Body of pancreas (tissue), 4 donors: ENCODE measurements at regions of chr12 and their contacts with region 1.

Region 1: GRCh38 chr12:12376646-12377448 is 20.0 kb downstream of the BORCS5 start:
- DNase-seq: peak in 3 of 4 donors; percentile 41 to 69 (median 59)
- ATAC-seq: peak; percentile 86
- H3K4me3 ChIP-seq: no peak overlapping the region
- H3K27ac ChIP-seq: no peak overlapping the region
- H3K4me1 ChIP-seq: peaks cover 29% of the 10 kb centered on the region
- H3K27me3 ChIP-seq: no peaks in the 10 kb centered on the region
- CTCF ChIP-seq: peak; percentile 50 to 94 (median 85)
- POLR2A ChIP-seq: no peak

Region 2: DNA sequence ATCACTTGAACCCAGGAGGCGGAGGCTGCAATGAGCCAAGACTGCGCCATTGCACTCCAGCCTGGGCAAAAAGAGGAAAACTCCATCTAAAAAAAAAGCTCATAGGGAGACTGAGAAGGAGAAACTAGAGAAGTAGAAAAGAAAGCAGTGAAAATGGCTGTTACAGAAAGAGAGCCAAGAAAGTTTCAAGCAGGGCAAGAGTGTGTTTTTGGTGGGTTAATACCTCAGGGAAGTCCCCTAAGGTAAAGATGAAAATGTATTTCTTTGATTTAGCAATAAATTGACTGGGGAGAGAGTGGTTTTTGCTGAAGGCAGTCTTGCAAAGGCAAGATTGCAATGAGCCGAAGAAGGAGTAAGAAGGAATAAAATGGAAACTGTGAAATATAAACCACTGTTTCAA is 195.8 kb after region 1 on chr12:
- intact Hi-C with region 1: loop called (anchors 5 kb)
- DNase-seq: no peak
- ATAC-seq: no peak
- H3K4me3 ChIP-seq: no peak overlapping the region
- H3K27ac ChIP-seq: no peak overlapping the region
- H3K4me1 ChIP-seq: no peaks in the 10 kb centered on the region
- H3K27me3 ChIP-seq: no peaks in the 10 kb centered on the region
- CTCF ChIP-seq: no peak
- POLR2A ChIP-seq: no peak

Region 3: GRCh38 chr12:12704593-12705230 is 327.9 kb after region 1 on chr12:
- intact Hi-C with region 1: loop called (anchors 10 kb)
- DNase-seq: peak; percentile 68 to 88 (median 79)
- ATAC-seq: peak; percentile 100
- H3K4me3 ChIP-seq: no peak overlapping the region
- H3K27ac ChIP-seq: peak overlapping the region in 2 of 4 donors; percentile 37 to 53
- H3K4me1 ChIP-seq: peaks cover 12% of the 10 kb centered on the region
- H3K27me3 ChIP-seq: no peaks in the 10 kb centered on the region
- CTCF ChIP-seq: peak; percentile 74 to 100 (median 99)
- POLR2A ChIP-seq: no peak

Region 4: GRCh38 chr12:12835378-12836145 is 458.7 kb after region 1 on chr12:
- intact Hi-C with region 1: no loop called
- DNase-seq: no peak
- ATAC-seq: no peak
- H3K4me3 ChIP-seq: no peak overlapping the region
- H3K27ac ChIP-seq: no peak overlapping the region
- H3K4me1 ChIP-seq: no peaks in the 10 kb centered on the region
- H3K27me3 ChIP-seq: no peaks in the 10 kb centered on the region
- CTCF ChIP-seq: no peak
- POLR2A ChIP-seq: no peak